Stomach (tissue), 19 donors: ENCODE measurements at regions of chr9 and their contacts with region 1.

Region 1: DNA sequence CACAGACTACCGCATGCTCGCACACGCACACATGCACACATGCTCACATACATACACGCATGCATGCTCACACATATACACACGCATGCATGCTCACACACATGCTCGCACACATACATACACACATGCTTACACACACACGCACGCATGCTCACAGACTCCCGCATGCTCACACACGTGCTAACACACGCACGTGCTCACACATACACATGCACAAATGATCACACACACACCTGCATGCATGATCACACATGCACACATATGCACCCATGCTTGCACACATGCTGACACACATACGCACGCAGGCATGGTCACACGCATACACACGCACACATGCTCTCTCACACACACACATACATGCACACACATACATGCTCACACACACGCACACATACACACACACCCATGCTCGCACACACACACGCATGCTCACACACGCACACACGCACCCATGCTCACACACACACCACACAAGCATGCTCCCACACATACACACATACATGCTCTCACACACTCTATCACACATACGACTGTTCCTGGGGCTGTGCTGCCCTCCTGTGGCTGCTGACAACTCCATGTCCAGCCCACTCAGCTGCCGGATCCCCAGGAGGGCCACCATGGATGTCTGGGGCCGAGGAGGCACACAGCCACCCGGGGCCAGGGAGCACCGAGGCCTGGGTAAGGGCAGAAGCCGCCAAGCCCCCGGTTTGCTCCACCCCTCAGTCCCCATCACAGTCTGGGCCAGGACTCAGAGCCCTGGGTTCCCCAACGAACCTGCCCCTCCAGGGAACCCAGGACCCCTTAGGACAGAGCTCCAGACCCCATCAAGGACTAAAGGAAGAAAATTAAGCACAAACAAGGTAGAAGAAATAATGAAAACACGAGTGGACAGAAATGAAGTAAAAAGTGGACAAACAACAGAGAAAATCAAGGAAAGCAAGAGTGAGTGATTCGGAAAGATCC is 31.4 kb upstream of the EGFL7 start:
- DNase-seq: peak; percentile 81 to 94
- H3K4me3 ChIP-seq: no peak overlapping the region
- H3K27ac ChIP-seq: no peak overlapping the region
- H3K4me1 ChIP-seq: peaks cover 23 to 53% (median 51%) of the 10 kb centered on the region in 4 donors
- H3K27me3 ChIP-seq: peaks cover 0 to 47% (median 7%) of the 10 kb centered on the region in 3 donors
- CTCF ChIP-seq: peak in 6 of 7 experiments; percentile 44 to 99 (median 80)
- EP300 ChIP-seq: no peak
- POLR2A ChIP-seq: peak in 1 of 4 donors; percentile 46

Region 2: DNA sequence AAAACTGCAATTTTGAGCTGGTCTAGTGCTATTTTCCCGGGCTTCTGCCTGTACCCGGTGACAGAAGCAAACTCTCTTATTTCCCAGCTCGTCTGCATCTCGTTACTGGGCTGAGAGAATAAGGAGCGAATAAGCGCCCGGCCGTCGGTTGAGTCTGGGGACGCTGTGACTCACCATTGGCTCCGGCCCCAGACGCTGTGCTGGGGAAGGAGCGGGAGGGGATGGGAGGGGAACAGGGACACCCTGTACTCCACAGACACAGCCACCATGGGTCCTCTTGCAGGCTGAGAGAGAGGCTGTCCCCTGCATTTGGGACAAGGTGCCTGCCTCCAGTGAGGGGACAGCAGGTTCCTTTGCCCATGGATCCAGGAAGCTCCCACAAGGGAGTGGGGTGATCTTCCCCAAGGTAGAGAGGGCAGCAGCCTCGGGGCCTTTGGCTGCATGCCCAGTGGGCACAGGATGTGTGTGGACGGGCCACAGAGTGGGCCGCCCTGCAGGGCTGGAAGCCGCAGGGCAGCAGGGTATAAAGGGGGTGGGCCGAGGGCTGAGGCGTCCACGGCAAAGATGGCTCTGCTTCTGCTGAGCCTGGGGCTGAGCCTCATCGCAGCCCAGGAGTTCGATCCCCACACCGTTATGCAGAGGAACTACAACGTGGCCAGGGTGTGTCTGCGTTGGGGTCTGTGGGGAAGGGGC is 968.4 kb before region 1 on chr9 and contains the start of gene LCN9:
- intact Hi-C with region 1: no loop called
- DNase-seq: peak in 1 of 2 donors; percentile 52
- H3K4me3 ChIP-seq: no peak within 1 kb of the TSS
- H3K27ac ChIP-seq: no peak within 1 kb of the TSS
- H3K4me1 ChIP-seq: no peaks in the 10 kb centered on the region
- H3K27me3 ChIP-seq: peaks cover 0 to 58% (median 0%) of the 10 kb centered on the region in 3 donors
- CTCF ChIP-seq: no peak
- EP300 ChIP-seq: no peak
- POLR2A ChIP-seq: no peak
- total RNA-seq, gene LCN9: not detected

Region 3: DNA sequence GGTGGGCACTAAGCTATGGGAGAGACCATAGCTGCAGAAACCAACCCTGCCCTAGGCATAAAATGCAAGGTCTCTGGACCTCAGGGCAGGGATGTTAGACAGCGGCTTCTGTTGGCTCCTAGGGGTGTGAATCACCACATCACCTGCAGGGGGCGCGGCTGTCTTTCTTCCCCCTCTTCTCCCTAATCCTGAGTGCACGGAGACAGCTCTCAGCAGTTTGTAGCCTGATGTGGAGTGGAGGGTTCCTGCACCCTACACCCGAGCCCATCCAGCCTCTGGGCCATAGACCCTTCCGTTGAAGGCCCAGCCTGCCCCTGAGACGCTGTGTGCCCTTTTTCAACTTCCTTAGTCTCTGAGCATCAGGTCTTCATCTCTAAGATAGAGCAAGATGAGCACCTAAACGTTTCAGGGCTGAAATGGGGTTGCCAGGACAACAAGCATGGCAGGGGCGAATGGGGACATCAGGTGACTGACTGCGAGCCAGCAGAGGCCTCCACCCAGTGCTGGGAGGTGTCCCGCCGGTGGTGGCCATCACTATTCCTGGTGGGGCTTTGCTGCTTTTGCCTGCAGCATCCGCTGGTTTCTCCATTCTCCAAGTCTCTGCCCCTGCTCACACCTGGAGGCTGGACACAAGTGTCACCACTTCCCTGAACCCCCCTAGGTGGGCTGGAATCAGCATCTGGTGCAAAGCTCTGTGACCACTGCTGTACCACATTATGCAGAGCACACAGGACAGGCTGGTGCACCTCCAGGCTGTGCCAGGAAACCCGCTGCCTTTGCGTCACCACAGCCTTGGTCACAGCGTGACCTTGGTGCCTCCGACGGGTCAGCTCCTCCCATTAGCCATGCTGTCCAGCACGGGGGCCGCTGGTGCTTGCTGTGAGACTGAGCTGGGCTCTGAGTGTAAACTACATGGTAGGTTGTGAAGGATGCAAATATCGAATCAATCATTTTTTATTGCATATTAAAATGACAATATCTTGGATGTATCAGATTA is 146.0 kb before region 1 on chr9:
- intact Hi-C with region 1: loop called (anchors 2 kb)
- DNase-seq: peak; percentile 88 to 94
- H3K4me3 ChIP-seq: peak overlapping the region in 1 of 4 donors; percentile 83
- H3K27ac ChIP-seq: peak overlapping the region; percentile 100
- H3K4me1 ChIP-seq: peaks cover 30 to 52% (median 50%) of the 10 kb centered on the region in 4 donors
- H3K27me3 ChIP-seq: peaks cover 0 to 5% (median 0%) of the 10 kb centered on the region in 3 donors
- CTCF ChIP-seq: peak in 6 of 7 experiments; percentile 36 to 91 (median 84)
- EP300 ChIP-seq: no peak
- POLR2A ChIP-seq: no peak

Region 4: DNA sequence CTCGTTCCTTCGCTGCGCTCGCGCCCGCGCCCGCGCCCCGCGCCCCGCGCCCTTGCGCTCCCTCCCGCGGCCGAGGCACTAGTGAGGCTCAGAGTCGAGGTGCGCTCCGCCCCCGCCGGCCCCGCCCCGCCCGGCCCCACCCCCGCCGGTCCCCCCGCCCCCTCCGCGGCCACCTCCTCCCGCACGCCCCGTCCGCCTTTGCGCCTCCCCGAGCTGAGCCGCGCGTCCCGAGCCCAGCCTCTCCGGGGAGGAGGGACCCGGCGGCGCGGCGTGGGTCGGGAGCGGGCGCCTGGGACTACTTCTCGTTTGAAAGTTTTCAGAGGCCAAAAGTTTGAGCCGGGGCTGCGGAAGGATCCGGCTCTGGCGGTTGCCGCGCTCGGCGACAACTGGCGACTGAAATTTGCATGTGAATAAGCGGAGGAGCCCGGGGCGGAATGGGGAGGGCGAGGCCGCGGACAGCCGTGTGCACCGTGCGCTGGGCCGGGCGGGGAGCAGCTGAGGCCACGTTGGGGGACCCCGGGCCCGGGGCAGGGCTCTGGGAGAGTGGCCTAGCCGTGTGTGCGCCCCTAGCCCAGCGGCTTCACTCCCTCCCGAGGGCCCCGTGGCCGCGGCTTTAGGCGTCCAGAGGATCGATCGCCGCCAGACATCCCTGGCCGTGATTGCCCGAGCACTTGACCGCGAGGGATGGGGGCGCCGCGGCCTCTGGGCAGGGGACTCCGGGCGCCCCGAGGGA is 85.2 kb before region 1 on chr9 and contains the start of gene NOTCH1:
- intact Hi-C with region 1: loop called (anchors 10 kb)
- DNase-seq: peak; percentile 93 to 97
- H3K4me3 ChIP-seq: peak within 1 kb of the TSS; percentile 70 to 92 (median 90)
- H3K27ac ChIP-seq: peak within 1 kb of the TSS; percentile 95 to 98 (median 97)
- H3K4me1 ChIP-seq: peaks cover 54 to 87% (median 79%) of the 10 kb centered on the region in 4 donors
- H3K27me3 ChIP-seq: no peaks in the 10 kb centered on the region
- CTCF ChIP-seq: peak in 1 of 7 experiments; percentile 25
- EP300 ChIP-seq: no peak
- POLR2A ChIP-seq: no peak
- total RNA-seq, gene NOTCH1: 18.4 to 338 (median 62.5) TPM